ENCODE measurements at regions of chr4 and their contacts with region 1.

Region 1: DNA sequence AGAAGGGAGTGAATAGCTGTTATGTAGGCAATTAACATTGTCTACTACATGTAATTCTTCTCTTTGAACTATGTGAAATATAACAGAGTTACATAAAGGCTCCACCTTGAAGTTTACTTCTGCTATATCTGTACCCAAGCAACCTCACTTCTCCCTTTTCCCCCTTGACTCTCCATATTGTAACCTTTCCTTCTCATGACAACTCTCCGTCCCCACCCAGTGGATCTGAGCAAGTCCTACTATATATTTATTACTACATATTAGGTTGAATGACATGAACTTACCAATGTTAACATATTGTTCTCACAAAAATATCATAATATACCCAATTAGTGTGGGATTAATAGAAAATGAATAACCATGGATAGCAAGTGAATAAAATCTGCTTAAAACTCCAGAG is 93.2 kb upstream of the ATP8A1 start:
- DNase-seq: peak in 1 of 2 donors; percentile 78
- ATAC-seq: peak; percentile 52 to 79 (median 63)
- H3K4me3 ChIP-seq: no peak overlapping the region
- H3K4me3 Mint-ChIP-seq: no peak overlapping the region
- H3K27ac ChIP-seq: no peak overlapping the region
- H3K27ac Mint-ChIP-seq: no peak overlapping the region
- H3K4me1 ChIP-seq: no peaks in the 10 kb centered on the region
- H3K4me1 Mint-ChIP-seq: no peaks in the 10 kb centered on the region
- H3K27me3 ChIP-seq: no peaks in the 10 kb centered on the region
- H3K27me3 Mint-ChIP-seq: peaks cover 0 to 3% of the 10 kb centered on the region in 2 donors
- CTCF ChIP-seq: peak; percentile 47

Region 2: DNA sequence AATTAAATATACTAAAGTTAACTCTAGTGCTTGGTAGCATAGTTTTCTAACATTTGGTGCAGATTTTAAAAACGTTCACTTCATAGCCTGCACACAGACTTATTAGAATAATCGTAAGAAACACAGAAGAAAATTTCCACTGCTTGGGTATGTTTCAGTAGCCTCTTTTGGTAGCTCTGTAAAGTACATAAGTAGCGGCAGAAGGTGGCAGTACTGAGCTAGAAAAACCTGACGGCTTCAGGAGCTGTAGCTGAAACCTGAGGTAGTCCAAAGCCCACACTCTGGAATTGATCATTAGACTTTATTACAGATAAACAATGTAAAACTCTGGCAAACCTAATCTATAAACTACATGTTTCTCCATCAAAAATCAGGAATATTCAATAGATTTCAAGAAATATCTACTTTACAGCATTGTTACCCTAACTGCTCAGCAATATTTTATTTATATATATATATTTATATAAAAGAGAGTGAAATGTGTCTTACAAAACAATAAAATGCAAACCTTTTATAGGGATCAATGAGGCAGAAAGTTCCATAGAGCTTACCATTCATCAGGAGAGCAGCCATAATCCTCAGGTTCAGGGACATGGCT is 181.4 kb before region 1 on chr4:
- intact Hi-C with region 1: loop called (anchors 1 kb)
- DNase-seq: peak; percentile 24 to 86
- ATAC-seq: peak; percentile 85 to 93 (median 93)
- H3K4me3 ChIP-seq: no peak overlapping the region
- H3K4me3 Mint-ChIP-seq: no peak overlapping the region
- H3K27ac ChIP-seq: no peak overlapping the region
- H3K27ac Mint-ChIP-seq: no peak overlapping the region
- H3K4me1 ChIP-seq: no peaks in the 10 kb centered on the region
- H3K4me1 Mint-ChIP-seq: no peaks in the 10 kb centered on the region
- H3K27me3 ChIP-seq: no peaks in the 10 kb centered on the region
- H3K27me3 Mint-ChIP-seq: no peaks in the 10 kb centered on the region
- CTCF ChIP-seq: peak; percentile 86

Measured in natural killer cell (primary cell).